Cardiac septum (tissue), 1 donor: ENCODE measurements at regions of chr3 and their contacts with region 1.

Region 1: DNA sequence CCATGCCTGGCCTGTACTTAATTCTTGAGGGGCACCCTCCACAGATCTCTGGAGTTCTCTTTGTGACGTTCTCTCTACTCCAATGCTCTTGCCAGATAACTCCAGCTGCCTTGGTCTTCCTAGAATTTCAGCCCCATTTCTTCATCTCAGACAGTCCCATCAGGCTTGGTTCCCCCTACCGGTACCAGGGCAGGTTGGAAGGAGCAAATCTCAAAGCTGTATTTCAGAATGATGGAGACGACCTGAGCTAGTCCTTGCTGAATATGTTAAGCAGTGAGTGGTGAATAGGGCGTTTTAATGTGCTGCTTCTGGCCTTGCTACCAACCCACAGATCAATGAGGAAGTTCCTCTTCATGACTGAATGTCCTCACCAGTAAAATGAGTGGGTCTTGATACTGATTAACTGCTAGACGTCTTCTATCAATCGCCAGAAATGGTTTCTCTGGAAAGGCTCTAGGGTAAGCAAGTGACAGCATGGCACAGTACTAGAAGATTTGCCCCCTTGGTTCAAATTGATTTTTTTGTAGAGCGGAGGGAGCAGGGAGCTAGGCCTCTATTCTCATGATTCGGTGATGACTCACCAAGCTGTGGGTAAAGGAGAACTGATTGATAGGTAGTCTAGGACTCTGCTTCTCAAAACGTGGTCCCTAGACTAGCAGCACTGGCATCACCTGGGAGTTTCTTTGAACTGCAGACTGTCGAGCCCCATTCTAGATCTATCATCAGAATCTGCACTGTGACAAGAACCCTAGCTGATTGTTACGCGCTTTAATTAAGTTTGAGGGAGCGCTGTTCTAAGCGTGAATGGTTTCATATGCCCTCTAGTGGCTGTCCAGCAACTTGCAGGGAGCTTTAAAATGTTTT is 67.8 kb downstream of the UBP1 start:
- DNase-seq: no peak

Region 2: DNA sequence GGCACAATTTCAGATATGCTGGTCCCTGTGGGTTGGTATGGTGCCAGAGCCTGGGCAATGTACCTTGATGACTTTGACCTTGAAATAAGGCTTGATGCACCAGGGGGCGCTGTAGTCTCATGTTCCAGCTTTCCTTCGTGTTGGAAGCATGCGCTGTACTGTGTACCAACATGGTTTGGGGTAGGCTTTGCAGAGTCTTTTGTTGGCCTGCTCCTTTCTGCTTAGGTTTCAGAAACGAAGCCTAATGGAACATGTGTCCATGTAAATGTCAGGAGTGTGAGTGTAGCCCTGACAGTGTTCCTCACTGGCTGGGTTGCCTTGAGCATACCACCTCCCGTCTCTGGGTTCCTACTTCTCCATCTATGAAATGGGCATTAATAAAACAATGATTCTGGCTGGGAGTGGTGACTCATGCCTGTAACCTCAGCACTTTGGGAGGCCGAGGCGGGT is 424.6 kb before region 1 on chr3:
- intact Hi-C with region 1: loop called (anchors 5 kb)
- DNase-seq: no peak

Region 3: GRCh38 chr3:33131331-33132018 is 241.0 kb before region 1 on chr3:
- intact Hi-C with region 1: loop called (anchors 1 kb)
- DNase-seq: no peak